ENCODE measurements at regions of chr10 and their contacts with region 1.

Region 1: GRCh38 chr10:7818295-7819122 is at the start of gene TAF3:
- DNase-seq: peak; percentile 93
- ATAC-seq: peak; percentile 90
- H3K4me3 Mint-ChIP-seq: peak within 1 kb of the TSS; percentile 93
- H3K27ac Mint-ChIP-seq: peak within 1 kb of the TSS; percentile 86
- H3K4me1 Mint-ChIP-seq: peaks cover 37% of the 10 kb centered on the region
- H3K27me3 Mint-ChIP-seq: no peaks in the 10 kb centered on the region
- CTCF ChIP-seq: no peak
- total RNA-seq, gene TAF3: 12.5 to 12.7 TPM

Region 2: GRCh38 chr10:7756360-7756992 is 62.0 kb before region 1 on chr10:
- CTCF ChIA-PET with region 1: no interaction called
- POLR2A ChIA-PET with region 1: no interaction called
- intact Hi-C with region 1: no loop called
- DNase-seq: peak; percentile 49
- ATAC-seq: peak; percentile 66
- H3K4me3 Mint-ChIP-seq: no peak overlapping the region
- H3K27ac Mint-ChIP-seq: no peak overlapping the region
- H3K4me1 Mint-ChIP-seq: no peaks in the 10 kb centered on the region
- H3K27me3 Mint-ChIP-seq: no peaks in the 10 kb centered on the region
- CTCF ChIP-seq: peak; percentile 59

Region 3: DNA sequence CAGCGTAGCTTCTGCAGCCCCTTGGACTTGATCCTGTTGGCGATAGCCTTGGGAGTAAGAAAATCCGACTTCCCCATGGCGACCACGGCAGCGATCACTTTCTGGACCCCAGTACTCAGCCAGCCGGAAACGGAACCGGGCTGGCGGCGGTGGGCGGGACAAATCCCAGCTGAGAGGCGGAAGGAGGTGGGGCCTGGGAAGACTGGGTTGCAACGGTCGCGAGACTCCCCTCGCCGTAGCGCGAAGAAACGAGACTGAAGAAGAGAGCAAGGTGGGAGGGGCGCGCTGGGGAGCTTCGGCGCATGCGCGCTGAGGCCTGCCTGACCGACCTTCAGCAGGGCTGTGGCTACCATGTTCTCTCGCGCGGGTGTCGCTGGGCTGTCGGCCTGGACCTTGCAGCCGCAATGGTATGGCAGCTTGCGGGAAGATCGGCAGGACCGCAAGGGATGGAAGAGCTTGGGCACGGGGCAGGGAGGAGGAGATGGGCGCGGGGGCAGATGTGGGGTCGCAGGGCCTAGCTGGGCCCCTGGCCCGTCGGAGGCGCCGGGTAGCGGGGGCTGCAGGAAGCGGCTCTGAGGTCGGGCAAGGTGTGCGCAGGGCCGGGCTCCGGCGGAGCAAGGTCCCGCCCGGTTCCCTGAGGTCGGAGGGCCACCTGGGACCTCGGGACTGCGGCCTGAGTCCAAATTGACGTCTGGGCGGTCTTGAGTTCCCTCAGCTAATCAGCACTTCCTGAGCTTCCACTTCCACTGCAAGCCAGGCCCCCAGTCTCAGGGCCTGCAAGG is 30.5 kb before region 1 on chr10 and contains the starts of genes ATP5F1C and KIN:
- CTCF ChIA-PET with region 1: interaction called, 3 read pairs
- POLR2A ChIA-PET with region 1: interaction called, 20 read pairs
- intact Hi-C with region 1: no loop called
- DNase-seq: peak; percentile 98
- ATAC-seq: peak; percentile 98
- H3K4me3 Mint-ChIP-seq: no peak within 1 kb of the TSS
- H3K27ac Mint-ChIP-seq: no peak within 1 kb of the TSS
- H3K4me1 Mint-ChIP-seq: peaks cover 56% of the 10 kb centered on the region
- H3K27me3 Mint-ChIP-seq: no peaks in the 10 kb centered on the region
- CTCF ChIP-seq: no peak
- total RNA-seq, gene ATP5F1C: 282 to 292 TPM
- total RNA-seq, gene KIN: 10.7 to 12.6 TPM

Region 4: DNA sequence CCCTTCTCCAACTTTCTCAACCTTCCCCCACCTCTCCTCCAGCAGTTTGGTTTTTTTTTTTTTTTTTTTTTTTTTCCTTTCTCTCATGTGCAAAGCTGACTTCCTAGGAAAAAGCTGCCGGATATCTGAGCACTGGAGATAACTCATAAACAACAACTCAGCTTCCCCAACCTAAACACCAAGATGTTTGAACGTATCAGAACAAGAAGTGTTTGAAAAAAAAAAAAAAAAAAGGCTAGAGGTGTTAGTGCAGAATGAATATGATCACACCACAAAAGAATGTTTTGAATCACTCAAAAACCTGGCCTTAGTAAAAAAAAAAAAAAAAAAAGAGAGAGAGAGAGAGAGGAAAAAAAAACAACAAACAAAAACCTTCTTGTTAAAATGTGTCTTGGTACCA is 247.1 kb after region 1 on chr10:
- CTCF ChIA-PET with region 1: no interaction called
- POLR2A ChIA-PET with region 1: no interaction called
- intact Hi-C with region 1: no loop called
- DNase-seq: no peak
- ATAC-seq: no peak
- H3K4me3 Mint-ChIP-seq: peak overlapping the region; percentile 50
- H3K27ac Mint-ChIP-seq: peak overlapping the region; percentile 84
- H3K4me1 Mint-ChIP-seq: peaks cover 89% of the 10 kb centered on the region
- H3K27me3 Mint-ChIP-seq: no peaks in the 10 kb centered on the region
- CTCF ChIP-seq: no peak

Measured in activated CD8-positive, alpha-beta T cell treated with anti-CD3 and anti-CD28 coated beads for 36 hours (primary cell).